Esophagus squamous epithelium (tissue), 5 donors: ENCODE measurements at regions of chr16 and their contacts with region 1.

Region 1: DNA sequence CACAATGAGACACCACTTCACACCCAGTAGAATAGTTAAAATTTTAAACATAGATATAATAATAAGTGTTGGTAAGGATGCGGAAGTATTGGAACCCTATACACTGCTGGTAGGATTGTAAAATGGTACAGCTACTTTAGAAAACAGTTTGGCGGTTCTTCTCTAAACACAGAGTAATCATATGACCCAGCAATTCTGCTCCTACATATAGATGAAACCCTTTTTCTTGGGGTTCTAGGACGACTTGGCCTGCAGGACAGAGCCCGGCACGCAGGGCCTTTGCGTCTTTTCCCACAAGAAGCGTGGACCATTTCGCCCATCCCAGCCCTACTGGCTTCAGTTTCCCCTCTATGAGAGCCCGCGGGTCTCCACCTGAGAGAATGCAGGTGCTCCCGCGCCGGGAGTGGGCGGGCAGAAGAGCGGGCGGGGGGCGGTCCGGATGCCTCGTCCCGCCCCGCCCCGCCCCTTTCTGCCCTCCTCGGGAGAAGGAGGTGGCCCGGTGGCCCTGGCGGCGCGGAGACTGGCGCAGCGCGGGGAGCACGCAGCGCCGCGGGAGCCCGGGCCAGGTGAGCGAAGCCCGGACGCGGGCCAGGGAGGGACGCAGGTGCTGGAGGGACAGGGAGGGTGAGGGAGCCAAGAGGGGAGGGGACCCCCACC is at the start of gene SDR42E2:
- DNase-seq: no peak
- H3K4me3 ChIP-seq: peak within 1 kb of the TSS in 2 of 4 donors; percentile 22 to 47
- H3K27ac ChIP-seq: no peak within 1 kb of the TSS
- H3K4me1 ChIP-seq: peaks cover 0 to 7% (median 4%) of the 10 kb centered on the region in 3 donors
- H3K27me3 ChIP-seq: peaks cover 0 to 50% (median 0%) of the 10 kb centered on the region in 4 donors
- CTCF ChIP-seq: no peak
- POLR2A ChIP-seq: no peak
- total RNA-seq, gene SDR42E2: not detected

Region 2: GRCh38 chr16:22117609-22118008 is 44.5 kb before region 1 on chr16:
- intact Hi-C with region 1: loop called (anchors 10 kb)
- DNase-seq: no peak
- H3K4me3 ChIP-seq: no peak overlapping the region
- H3K27ac ChIP-seq: no peak overlapping the region
- H3K4me1 ChIP-seq: no peaks in the 10 kb centered on the region
- H3K27me3 ChIP-seq: peaks cover 0 to under 1% (median 0%) of the 10 kb centered on the region in 4 donors
- CTCF ChIP-seq: no peak
- POLR2A ChIP-seq: no peak

Region 3: DNA sequence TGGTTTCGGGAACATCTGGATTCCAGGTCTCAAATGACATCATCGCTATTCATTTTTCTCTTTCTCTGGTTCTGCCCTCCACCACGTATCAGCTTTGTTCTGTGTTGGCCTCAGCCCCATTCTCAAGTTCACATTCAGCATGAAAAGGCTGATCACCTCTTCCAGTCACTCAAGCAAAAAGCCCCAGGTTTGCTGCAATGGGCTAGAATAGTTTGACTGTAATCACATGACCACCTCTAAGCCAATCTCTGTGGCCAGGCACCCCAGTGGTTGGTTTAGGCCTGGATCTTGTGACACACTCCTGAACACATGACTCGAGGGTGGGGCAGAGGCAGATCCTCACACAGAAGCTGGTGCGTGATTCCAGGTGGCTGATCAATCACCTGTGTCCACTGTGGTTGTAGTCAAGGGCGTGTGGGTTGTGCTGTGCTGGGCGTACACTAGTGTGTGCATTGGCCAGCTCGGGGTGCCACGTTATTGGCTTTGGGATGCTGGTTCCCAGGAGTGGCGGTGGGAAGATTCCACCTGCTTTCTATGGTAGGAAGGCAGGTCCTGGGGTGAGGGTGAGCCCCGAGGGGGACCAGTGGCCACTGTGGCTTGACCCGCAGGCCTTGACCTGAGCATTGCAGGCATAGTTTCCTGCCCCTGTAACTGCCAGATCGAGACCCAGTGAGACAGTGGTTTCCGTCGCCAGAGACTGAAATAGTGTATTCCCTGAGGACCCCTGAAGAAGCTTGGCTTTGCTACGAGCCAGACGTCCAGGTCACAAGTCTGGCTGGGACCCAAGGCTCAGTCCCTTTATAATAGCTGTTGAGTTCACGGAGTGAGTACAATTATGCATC is 56.0 kb after region 1 on chr16:
- intact Hi-C with region 1: no loop called
- DNase-seq: no peak
- H3K4me3 ChIP-seq: no peak overlapping the region
- H3K27ac ChIP-seq: peak overlapping the region in 1 of 4 donors; percentile 68
- H3K4me1 ChIP-seq: peaks cover 4 to 61% (median 4%) of the 10 kb centered on the region in 3 donors
- H3K27me3 ChIP-seq: no peaks in the 10 kb centered on the region
- CTCF ChIP-seq: no peak
- POLR2A ChIP-seq: no peak